Activated naive CD4-positive, alpha-beta T cell treated with anti-CD3 and anti-CD28 coated beads for 36 hours (primary cell): ENCODE measurements at regions of chr2 and their contacts with region 1.

Region 1: DNA sequence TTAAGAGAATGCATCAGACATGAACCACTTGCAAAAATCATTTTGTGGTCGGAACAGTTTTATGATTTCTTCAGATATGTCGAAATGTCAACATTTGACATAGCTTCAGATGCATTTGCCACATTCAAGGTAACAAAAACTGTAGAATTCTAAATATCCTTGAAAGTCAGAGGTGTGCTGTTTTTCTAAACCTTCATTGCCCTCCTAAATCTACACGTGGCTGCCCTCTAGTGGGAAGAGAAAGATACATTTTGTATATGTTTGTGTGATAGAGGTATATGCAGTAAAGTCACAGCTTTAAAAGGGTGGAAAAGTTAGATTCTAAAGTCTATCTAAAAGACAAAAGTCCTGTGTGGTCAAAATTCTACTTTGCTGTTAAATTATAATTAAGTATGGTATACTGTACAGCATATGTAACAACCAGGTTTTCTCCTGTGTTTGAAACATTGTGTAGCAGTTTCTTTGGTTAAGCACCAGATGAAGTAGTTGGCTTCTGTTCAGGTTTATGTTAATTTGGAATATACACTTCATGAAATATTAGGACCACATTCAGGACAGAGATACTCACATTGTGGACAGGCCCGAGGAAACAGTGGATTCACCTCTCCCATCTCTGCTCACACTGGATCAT is 65.9 kb upstream of the ITM2C start:
- DNase-seq: peak; percentile 72
- H3K4me3 Mint-ChIP-seq: no peak overlapping the region
- H3K27ac Mint-ChIP-seq: no peak overlapping the region
- H3K4me1 Mint-ChIP-seq: peaks cover 14% of the 10 kb centered on the region
- H3K27me3 Mint-ChIP-seq: no peaks in the 10 kb centered on the region

Region 2: GRCh38 chr2:229921892-229922445 is 876.9 kb before region 1 on chr2 and contains the start of gene TRIP12:
- CTCF ChIA-PET with region 1: no interaction called
- intact Hi-C with region 1: loop called (anchors 5 kb)
- DNase-seq: peak; percentile 91
- H3K4me3 Mint-ChIP-seq: peak within 1 kb of the TSS; percentile 90
- H3K27ac Mint-ChIP-seq: peak within 1 kb of the TSS; percentile 99
- H3K4me1 Mint-ChIP-seq: peaks cover 34% of the 10 kb centered on the region
- H3K27me3 Mint-ChIP-seq: no peaks in the 10 kb centered on the region
- total RNA-seq, gene TRIP12: 188 to 190 TPM

Region 3: GRCh38 chr2:230326453-230327417 is 472.1 kb before region 1 on chr2 and contains the start of gene SP140L:
- CTCF ChIA-PET with region 1: no interaction called
- intact Hi-C with region 1: loop called (anchors 5 kb)
- DNase-seq: peak; percentile 88
- H3K4me3 Mint-ChIP-seq: peak within 1 kb of the TSS; percentile 96
- H3K27ac Mint-ChIP-seq: peak within 1 kb of the TSS; percentile 99
- H3K4me1 Mint-ChIP-seq: peaks cover 60% of the 10 kb centered on the region
- H3K27me3 Mint-ChIP-seq: no peaks in the 10 kb centered on the region
- total RNA-seq, gene SP140L: 41.8 to 44.7 TPM

Region 4: DNA sequence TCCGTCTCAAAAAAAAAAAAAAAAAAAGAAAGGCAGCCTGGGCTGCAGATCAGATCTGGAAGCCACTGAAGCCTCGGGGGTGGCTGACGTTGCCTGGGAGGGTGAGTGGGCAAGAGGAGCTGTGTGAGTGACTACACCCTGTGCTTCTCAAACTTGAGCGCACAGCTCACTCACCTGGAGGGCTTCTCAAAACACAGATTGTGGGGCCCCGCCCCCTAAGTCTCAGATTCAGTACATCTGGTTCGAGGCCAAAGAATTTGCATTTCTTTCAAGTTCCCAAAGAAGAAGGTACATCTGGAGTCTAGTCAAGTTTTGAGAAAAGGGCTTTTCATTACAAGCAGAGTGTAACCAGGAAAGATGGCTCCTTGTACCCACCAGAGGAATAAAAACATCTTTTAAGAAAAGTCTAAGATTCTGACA is 184.0 kb before region 1 on chr2:
- CTCF ChIA-PET with region 1: interaction called, 7 read pairs
- intact Hi-C with region 1: loop called (anchors 1 kb)
- DNase-seq: peak; percentile 79
- H3K4me3 Mint-ChIP-seq: no peak overlapping the region
- H3K27ac Mint-ChIP-seq: peak overlapping the region; percentile 71
- H3K4me1 Mint-ChIP-seq: peaks cover 33% of the 10 kb centered on the region
- H3K27me3 Mint-ChIP-seq: no peaks in the 10 kb centered on the region

Region 5: GRCh38 chr2:230712443-230713330 is 86.2 kb before region 1 on chr2 and contains the start of gene CAB39:
- CTCF ChIA-PET with region 1: interaction called, 53 read pairs
- intact Hi-C with region 1: loop called (anchors 1 kb)
- DNase-seq: peak; percentile 84
- H3K4me3 Mint-ChIP-seq: peak within 1 kb of the TSS; percentile 90
- H3K27ac Mint-ChIP-seq: peak within 1 kb of the TSS; percentile 94
- H3K4me1 Mint-ChIP-seq: peaks cover 40% of the 10 kb centered on the region
- H3K27me3 Mint-ChIP-seq: no peaks in the 10 kb centered on the region
- total RNA-seq, gene CAB39: 86.6 to 97.5 TPM

Region 6: GRCh38 chr2:230735884-230736283 is 63.0 kb before region 1 on chr2:
- CTCF ChIA-PET with region 1: interaction called, 12 read pairs
- intact Hi-C with region 1: loop called (anchors 1 kb)
- DNase-seq: no peak
- H3K4me3 Mint-ChIP-seq: no peak overlapping the region
- H3K27ac Mint-ChIP-seq: peak overlapping the region; percentile 17
- H3K4me1 Mint-ChIP-seq: peaks cover 81% of the 10 kb centered on the region
- H3K27me3 Mint-ChIP-seq: no peaks in the 10 kb centered on the region

Region 7: GRCh38 chr2:230830428-230830827 is 31.5 kb after region 1 on chr2:
- CTCF ChIA-PET with region 1: no interaction called
- intact Hi-C with region 1: no loop called
- DNase-seq: peak; percentile 26
- H3K4me3 Mint-ChIP-seq: no peak overlapping the region
- H3K27ac Mint-ChIP-seq: no peak overlapping the region
- H3K4me1 Mint-ChIP-seq: no peaks in the 10 kb centered on the region
- H3K27me3 Mint-ChIP-seq: peaks cover 37% of the 10 kb centered on the region

Region 8: DNA sequence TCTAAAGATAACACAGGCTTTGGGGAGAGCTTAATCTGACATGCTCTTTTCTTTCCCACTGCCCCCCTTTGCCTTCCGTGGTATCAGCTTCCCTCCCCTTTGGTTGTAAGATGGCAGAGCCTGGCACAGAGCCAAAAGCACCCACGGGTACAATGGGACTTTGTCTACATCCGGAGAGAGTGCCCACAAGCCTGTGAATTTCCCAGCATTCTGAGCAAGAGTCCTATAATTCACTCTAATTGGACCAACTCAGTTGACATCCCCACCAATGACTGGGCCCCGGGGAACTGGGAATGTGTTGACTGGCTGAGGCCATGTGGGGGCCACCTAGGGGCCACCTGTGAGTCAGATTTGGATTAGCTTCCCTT is 218.3 kb after region 1 on chr2:
- CTCF ChIA-PET with region 1: no interaction called
- intact Hi-C with region 1: no loop called
- DNase-seq: peak; percentile 7
- H3K4me3 Mint-ChIP-seq: no peak overlapping the region
- H3K27ac Mint-ChIP-seq: no peak overlapping the region
- H3K4me1 Mint-ChIP-seq: no peaks in the 10 kb centered on the region
- H3K27me3 Mint-ChIP-seq: peaks cover 9% of the 10 kb centered on the region

Region 9: GRCh38 chr2:231124838-231125568 is 326.1 kb after region 1 on chr2 and contains the start of gene HTR2B:
- CTCF ChIA-PET with region 1: no interaction called
- intact Hi-C with region 1: no loop called
- DNase-seq: peak; percentile 22
- H3K4me3 Mint-ChIP-seq: no peak within 1 kb of the TSS
- H3K27ac Mint-ChIP-seq: no peak within 1 kb of the TSS
- H3K4me1 Mint-ChIP-seq: peaks cover 18% of the 10 kb centered on the region
- H3K27me3 Mint-ChIP-seq: no peaks in the 10 kb centered on the region
- total RNA-seq, gene HTR2B: not detected